ENCODE measurements at regions of chr4 and their contacts with region 1.

Region 1: DNA sequence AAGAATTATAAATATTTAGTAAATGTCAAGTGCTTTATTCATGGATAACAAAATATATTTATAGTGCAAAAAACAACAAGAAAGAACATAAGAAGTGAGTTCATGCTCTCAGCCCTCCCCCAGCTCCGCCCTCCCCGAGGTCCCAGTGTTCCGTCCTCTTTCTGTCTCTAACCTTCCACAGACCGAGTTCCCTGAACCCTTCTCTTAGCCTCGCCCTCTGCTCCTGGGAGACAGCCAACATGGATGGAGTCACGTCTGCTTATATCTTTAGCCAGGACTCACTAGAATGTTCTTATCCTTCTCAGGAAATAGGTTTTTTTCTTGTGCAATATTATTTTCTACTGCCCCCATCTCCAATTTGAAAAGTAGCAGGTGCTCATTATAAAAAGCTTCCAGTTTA is 40.1 kb upstream of the HELT start:
- DNase-seq: no peak
- H3K4me3 ChIP-seq: no peak overlapping the region
- H3K27ac ChIP-seq: no peak overlapping the region
- H3K4me1 ChIP-seq: peaks cover 0 to 6% (median 0%) of the 10 kb centered on the region in 4 donors
- H3K27me3 ChIP-seq: peaks cover 0 to 6% of the 10 kb centered on the region in 2 donors
- CTCF ChIP-seq: no peak

Region 2: DNA sequence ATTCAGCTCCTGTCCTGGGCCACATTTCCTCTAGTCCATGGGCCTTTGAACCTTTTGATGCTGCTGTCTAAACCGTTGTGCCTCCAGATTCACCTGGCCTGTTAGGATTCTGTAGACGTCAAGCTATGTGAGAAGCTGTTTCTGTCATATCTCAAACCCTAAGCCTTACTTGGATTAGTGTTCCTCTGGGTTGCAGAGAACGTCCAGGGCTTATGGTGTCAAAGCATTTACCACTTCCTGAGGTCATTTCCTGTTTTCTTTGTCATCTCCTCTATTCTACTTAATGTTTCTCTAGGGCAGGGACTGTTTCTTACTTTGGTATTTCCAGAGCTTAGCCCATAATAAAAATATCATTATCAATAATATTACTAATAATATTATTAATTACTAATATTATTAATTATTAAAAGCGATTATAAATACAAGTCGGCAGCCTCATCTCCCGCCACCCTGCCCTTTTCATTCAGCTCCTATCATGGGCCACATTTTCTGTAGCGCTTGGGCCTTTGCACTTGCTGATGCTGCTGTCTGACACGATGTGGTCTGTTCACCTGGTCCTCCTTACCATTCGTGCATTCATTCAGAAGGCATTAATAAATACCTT is 309.6 kb before region 1 on chr4:
- intact Hi-C with region 1: no loop called
- DNase-seq: no peak
- H3K4me3 ChIP-seq: no peak overlapping the region
- H3K27ac ChIP-seq: no peak overlapping the region
- H3K4me1 ChIP-seq: no peaks in the 10 kb centered on the region
- H3K27me3 ChIP-seq: no peaks in the 10 kb centered on the region
- CTCF ChIP-seq: no peak

Region 3: DNA sequence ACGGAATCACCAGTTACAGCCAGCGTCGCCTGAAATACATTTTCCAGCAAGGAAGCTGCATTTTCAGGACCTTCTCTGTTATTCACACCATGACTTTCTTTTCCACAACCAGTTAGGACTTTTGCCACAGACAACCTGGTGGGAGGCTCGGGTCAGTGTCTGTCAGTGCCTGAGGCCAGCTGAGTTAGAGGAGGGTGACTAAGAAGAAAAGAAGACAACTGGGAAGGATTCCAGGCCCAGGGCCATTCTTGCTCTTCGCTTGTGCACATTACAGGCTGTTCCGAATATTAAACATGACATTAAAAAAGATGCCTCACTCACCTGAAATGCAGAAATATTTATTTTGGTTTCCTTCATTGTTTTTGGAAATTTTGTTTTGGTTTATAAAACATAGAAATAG is 222.9 kb before region 1 on chr4:
- intact Hi-C with region 1: loop called (anchors 10 kb)
- DNase-seq: no peak
- H3K4me3 ChIP-seq: no peak overlapping the region
- H3K27ac ChIP-seq: no peak overlapping the region
- H3K4me1 ChIP-seq: peaks cover 0 to 14% (median 0%) of the 10 kb centered on the region in 4 donors
- H3K27me3 ChIP-seq: no peaks in the 10 kb centered on the region
- CTCF ChIP-seq: no peak

Region 4: DNA sequence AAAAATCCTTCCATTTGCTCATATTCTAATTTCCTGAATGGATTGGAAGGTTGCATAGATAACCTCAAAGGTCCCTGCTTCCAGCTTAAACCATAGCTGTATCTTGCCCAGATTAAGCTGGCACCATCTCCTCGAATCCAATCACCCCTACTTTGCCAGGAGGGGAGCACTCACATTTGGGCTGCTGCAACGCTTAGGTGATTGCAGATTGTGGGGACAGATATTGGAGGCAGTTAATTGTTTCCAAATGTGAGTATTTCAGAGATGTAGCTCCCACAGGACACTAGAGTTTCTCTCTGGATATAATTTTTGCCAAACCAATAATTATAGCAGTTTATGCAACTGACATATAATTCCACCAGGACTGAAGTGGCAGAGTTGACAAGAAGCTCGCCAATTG is 98.9 kb before region 1 on chr4:
- intact Hi-C with region 1: no loop called
- DNase-seq: no peak
- H3K4me3 ChIP-seq: no peak overlapping the region
- H3K27ac ChIP-seq: no peak overlapping the region
- H3K4me1 ChIP-seq: no peaks in the 10 kb centered on the region
- H3K27me3 ChIP-seq: no peaks in the 10 kb centered on the region
- CTCF ChIP-seq: no peak

Region 5: DNA sequence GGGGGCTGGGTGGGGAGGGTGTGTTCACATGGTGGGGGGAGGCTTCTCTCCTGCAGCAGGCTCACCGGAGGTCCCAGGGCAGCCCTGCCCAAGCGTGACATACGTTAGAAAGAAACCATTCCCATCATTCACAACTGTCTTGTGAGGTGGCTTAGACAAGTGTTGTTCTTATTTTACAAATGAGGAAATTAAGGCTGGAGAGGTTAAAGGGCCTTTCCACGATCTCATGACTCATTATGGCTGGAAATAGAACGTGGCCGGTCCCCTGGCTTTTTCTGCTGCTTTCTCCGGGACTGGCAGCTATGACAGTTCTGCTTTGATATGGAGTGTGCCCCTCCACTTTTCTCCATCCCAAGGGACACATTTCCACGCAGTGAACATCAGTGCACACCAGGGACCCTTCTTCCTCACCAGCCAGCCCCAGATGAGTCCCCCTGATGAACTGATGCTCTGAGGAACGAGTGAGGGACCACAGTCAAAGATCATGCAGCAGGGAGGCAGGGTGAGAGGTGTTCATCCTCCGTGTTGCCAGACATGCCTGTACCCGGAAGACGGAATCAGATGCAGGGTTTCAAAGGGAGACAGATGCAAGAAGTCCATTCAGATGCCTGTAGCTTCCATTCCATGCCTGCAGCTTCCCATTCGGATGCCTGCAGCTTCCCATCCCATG is 88.4 kb before region 1 on chr4:
- intact Hi-C with region 1: no loop called
- DNase-seq: no peak
- H3K4me3 ChIP-seq: no peak overlapping the region
- H3K27ac ChIP-seq: no peak overlapping the region
- H3K4me1 ChIP-seq: no peaks in the 10 kb centered on the region
- H3K27me3 ChIP-seq: no peaks in the 10 kb centered on the region
- CTCF ChIP-seq: no peak

Measured in tibial artery (tissue), 4 donors.